ENCODE measurements at regions of chr17 and their contacts with region 1.

Region 1: DNA sequence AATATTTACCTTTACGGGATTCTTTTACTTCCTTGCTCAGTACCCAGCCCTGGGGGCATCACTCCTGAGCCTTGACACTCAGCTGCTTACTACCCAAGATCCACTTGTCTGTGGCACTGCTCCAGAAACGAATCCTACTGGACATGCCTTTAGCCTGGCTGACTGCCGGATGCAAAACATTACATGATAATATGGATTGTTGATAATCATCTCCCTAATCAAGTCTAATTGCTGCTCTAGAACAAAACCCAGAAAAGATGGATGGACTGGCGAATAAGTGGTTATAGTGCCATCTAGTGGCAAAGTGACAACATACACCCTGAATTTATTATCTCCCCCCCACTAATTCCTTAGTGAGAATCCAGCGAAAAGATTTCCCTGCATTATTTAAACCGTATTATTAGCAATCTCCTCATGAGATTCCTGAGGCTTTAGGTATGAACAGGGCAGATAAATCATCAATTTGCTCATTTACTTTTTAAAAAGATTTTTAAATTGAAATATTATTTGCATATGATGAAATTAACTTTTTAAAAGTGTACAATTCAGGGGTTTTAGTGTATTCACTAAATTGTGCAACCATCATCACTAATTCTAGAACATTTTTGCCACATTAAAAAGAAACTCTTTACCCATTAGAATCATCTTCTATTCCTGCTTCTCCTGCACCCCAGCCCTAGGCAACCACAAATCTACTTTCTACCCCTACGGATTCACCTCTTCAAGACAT is 61.6 kb downstream of the RGS9 start:
- DNase-seq: peak; percentile 73
- H3K4me3 ChIP-seq: no peak overlapping the region
- H3K27ac ChIP-seq: no peak overlapping the region
- H3K4me1 ChIP-seq: no peaks in the 10 kb centered on the region
- H3K27me3 ChIP-seq: no peaks in the 10 kb centered on the region
- CTCF ChIP-seq: peak; percentile 80

Region 2: DNA sequence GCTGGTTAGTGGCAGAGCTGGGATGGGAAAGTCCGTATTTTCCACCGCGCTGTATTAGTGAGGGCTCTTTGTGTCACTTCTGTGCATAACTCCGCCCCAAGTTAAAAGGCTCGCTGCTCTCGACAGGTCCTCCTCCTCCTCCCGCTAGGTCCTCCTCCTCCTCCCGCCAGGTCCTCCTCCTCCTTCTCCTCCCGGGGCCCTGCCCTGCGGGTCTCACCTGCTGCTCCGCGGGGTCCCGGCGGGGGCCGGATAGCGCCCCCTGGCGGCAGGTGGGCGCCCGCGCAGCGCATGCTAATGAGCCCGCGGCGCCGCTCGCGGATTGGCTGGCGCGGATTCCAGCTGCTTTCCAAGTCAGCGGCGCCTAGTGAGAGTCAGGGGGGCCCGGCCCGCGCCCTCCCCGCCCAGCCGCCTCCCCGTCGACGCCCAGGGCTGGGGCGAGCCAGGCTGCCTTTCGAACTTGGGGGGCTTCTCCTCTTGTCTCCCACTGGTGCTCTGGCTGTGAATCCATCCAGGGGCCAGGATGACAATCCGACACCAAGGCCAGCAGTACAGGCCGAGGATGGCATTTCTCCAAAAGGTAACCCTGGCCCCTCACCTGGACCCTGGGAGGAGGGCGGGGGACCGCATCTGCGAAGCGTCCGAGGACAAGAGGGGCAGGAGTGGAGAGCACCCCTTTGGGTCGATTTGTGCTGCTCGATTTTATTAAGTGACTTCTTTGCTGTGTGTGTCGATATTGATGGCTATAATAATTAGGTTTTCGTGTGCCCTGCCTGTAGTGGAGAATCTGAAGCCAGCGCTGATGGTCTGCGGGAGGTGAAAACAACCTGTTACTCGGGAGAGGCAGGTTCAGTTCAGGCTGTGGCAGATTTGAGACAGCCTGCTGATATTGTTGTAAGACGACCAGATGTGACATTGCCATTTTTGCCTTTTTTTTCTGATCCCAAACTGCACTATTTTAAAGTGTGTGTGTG is 61.5 kb before region 1 on chr17 and contains the start of gene RGS9:
- CTCF ChIA-PET with region 1: no interaction called
- POLR2A ChIA-PET with region 1: no interaction called
- intact Hi-C with region 1: loop called (anchors 5 kb)
- DNase-seq: peak; percentile 74
- H3K4me3 ChIP-seq: peak within 1 kb of the TSS; percentile 30
- H3K27ac ChIP-seq: no peak within 1 kb of the TSS
- H3K4me1 ChIP-seq: no peaks in the 10 kb centered on the region
- H3K27me3 ChIP-seq: peaks cover 26% of the 10 kb centered on the region
- CTCF ChIP-seq: peak; percentile 88
- total RNA-seq, gene RGS9: 1.8 and 2.8 TPM in 2 replicates